ENCODE measurements at regions of chr4 and their contacts with region 1.

Region 1: DNA sequence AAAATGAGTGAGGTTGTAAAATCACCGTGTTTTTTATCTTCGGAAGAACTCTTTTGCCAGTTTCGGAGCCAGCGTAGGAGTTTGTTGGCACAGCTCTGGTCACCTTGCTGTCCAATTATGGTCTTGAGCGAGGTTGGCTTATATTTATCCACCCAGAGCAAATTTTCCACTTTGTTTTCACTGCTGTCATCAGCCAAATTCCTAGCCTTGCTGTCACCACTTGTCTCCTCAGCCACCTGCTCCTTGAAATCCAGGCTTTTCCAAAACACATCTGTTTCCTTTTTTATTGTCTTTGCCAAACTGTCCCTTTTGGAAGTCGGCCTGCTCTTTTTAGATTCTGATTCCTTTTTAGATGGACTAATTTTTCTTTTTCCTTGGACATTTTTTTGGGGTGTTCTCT is 57.6 kb downstream of the RFC1 start:
- DNase-seq: no peak
- H3K4me3 Mint-ChIP-seq: no peak overlapping the region
- H3K27ac Mint-ChIP-seq: no peak overlapping the region
- H3K4me1 Mint-ChIP-seq: no peaks in the 10 kb centered on the region
- H3K27me3 Mint-ChIP-seq: no peaks in the 10 kb centered on the region

Region 2: DNA sequence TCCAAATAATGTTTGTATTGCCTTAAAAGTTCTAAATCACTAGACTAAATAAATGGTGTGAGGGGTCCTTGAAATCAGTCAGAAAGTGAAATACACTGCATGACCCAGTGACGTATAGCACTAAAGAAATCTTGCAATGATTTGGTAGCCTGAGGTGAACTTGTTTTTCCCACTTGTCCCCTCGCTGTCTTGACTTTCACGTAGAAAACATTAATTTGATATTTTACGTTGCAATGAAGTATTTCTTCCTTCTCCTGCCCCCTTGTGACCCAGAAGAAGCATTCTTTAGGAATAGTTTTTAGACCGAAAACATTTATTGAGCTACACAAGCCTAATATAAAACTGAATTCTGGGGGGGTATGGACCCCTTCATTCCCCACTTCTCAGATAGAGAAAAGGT is 101.8 kb after region 1 on chr4:
- CTCF ChIA-PET with region 1: interaction called, 3 read pairs
- intact Hi-C with region 1: loop called (anchors 10 kb)
- DNase-seq: no peak
- H3K4me3 Mint-ChIP-seq: no peak overlapping the region
- H3K27ac Mint-ChIP-seq: no peak overlapping the region
- H3K4me1 Mint-ChIP-seq: no peaks in the 10 kb centered on the region
- H3K27me3 Mint-ChIP-seq: no peaks in the 10 kb centered on the region

Region 3: GRCh38 chr4:40033613-40034012 is 725.0 kb after region 1 on chr4:
- CTCF ChIA-PET with region 1: no interaction called
- intact Hi-C with region 1: no loop called
- DNase-seq: no peak
- H3K4me3 Mint-ChIP-seq: no peak overlapping the region
- H3K27ac Mint-ChIP-seq: no peak overlapping the region
- H3K4me1 Mint-ChIP-seq: no peaks in the 10 kb centered on the region
- H3K27me3 Mint-ChIP-seq: no peaks in the 10 kb centered on the region